Activated T-helper 2 cell treated with anti-CD3 and anti-CD28 coated beads, Interferon-gamma antibody, Interleukin-2, Interleukin-4, amounts not matched to agents 10 μg/mL and 5 μg/mL and 100 μg/mL, durations not matched to agents 14 hours and 24 hours and 36 hours (primary cell): ENCODE measurements at regions of chr3 and their contacts with region 1.

Region 1: DNA sequence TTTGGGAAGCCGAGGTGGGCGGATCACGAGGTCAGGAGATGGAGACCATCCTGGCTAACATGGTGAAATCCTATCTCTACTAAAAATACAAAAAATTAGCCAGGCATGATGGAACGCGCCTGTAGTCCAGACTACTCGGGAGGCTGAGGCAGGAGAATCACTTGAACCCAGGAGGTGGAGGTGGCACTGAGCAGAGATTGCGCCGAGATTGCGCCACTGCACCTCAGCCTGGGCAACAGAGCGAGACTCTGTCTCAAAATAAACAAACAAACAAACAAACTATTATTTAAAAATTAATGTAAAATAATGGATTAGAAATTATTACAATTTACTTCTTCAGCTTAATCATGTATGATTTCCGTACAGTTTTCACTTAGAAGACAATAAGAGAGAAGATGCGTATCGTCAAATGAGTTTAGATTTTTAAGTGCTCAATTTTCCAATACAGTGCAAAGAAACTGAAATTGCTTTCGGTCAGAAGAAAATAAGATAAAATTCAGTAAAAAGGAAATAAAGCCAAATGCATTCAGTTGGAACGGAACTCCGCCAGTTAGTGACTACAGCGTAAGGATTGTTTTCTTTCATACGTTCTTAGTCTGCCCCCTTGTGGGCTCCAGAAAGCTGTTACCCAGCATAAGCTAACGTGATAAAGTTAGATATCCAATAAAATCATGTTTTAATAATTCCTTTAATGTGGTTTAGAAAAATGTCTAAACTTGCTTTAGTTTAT is 24.8 kb downstream of the AADAC start:
- DNase-seq: no peak
- H3K4me3 Mint-ChIP-seq: no peak overlapping the region
- H3K27ac Mint-ChIP-seq: no peak overlapping the region
- H3K4me1 Mint-ChIP-seq: peaks cover 2% of the 10 kb centered on the region
- H3K27me3 Mint-ChIP-seq: peaks cover 39% of the 10 kb centered on the region

Region 2: GRCh38 chr3:151290673-151291072 is 548.1 kb before region 1 on chr3:
- intact Hi-C with region 1: loop called (anchors 2 kb)
- DNase-seq: no peak
- H3K4me3 Mint-ChIP-seq: no peak overlapping the region
- H3K27ac Mint-ChIP-seq: no peak overlapping the region
- H3K4me1 Mint-ChIP-seq: peaks cover 18% of the 10 kb centered on the region
- H3K27me3 Mint-ChIP-seq: peaks cover 4% of the 10 kb centered on the region

Region 3: GRCh38 chr3:151468284-151468917 is 370.3 kb before region 1 on chr3:
- intact Hi-C with region 1: loop called (anchors 5 kb)
- DNase-seq: no peak
- H3K4me3 Mint-ChIP-seq: no peak overlapping the region
- H3K27ac Mint-ChIP-seq: no peak overlapping the region
- H3K4me1 Mint-ChIP-seq: no peaks in the 10 kb centered on the region
- H3K27me3 Mint-ChIP-seq: peaks cover 7% of the 10 kb centered on the region

Region 4: GRCh38 chr3:151630938-151631441 is 207.8 kb before region 1 on chr3:
- intact Hi-C with region 1: no loop called
- DNase-seq: no peak
- H3K4me3 Mint-ChIP-seq: no peak overlapping the region
- H3K27ac Mint-ChIP-seq: no peak overlapping the region
- H3K4me1 Mint-ChIP-seq: no peaks in the 10 kb centered on the region
- H3K27me3 Mint-ChIP-seq: peaks cover 4% of the 10 kb centered on the region

Region 5: DNA sequence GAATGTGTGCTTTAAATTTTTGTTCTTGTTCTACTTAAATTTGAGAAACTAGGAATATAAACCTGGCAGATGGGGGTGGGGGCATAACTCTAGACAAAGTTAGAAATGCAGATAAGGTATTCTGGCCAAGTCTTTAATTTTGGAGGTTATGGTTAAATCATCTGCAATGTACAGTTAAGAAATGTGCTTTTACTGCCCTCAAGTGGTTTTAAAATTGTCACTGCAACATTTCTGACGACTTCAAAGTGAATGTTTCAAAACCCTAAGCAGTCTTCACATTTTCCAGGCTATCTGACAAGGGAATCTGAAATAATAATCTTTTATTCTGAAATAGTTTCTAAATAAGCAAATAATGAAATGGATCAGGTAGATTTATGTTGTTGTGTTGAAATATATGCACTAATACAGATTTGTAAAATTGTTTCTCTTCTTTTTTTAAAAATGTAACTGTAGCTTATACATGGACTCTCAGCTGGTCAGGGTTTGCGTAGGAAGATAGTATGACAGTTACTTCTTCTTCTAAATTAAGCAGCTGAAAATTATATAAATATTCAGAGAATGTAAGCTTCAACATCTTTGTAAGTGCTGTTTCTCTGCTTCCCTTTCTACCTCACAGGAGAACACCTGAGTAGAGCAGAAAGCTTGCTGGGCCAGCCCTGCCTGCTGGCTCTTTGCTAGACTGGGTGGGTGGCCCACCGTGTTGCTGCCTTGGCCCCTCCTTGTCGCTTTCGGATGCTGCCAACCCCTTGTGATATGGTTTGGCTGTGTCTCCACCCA is 79.7 kb after region 1 on chr3:
- intact Hi-C with region 1: loop called (anchors 1 kb)
- DNase-seq: no peak
- H3K4me3 Mint-ChIP-seq: no peak overlapping the region
- H3K27ac Mint-ChIP-seq: no peak overlapping the region
- H3K4me1 Mint-ChIP-seq: peaks cover 2% of the 10 kb centered on the region
- H3K27me3 Mint-ChIP-seq: peaks cover 17% of the 10 kb centered on the region